ENCODE measurements at regions of chr1 and their contacts with region 1.

Region 1: GRCh38 chr1:3319874-3320245 is 134.6 kb upstream of the ARHGEF16 start:
- DNase-seq: no peak
- H3K4me3 ChIP-seq: no peak overlapping the region
- H3K27ac ChIP-seq: peak overlapping the region; percentile 15 to 51
- H3K4me1 ChIP-seq: peaks cover 10 to 63% of the 10 kb centered on the region in 2 donors
- H3K27me3 ChIP-seq: no peaks in the 10 kb centered on the region
- CTCF ChIP-seq: peak; percentile 57 to 75 (median 74)

Region 2: DNA sequence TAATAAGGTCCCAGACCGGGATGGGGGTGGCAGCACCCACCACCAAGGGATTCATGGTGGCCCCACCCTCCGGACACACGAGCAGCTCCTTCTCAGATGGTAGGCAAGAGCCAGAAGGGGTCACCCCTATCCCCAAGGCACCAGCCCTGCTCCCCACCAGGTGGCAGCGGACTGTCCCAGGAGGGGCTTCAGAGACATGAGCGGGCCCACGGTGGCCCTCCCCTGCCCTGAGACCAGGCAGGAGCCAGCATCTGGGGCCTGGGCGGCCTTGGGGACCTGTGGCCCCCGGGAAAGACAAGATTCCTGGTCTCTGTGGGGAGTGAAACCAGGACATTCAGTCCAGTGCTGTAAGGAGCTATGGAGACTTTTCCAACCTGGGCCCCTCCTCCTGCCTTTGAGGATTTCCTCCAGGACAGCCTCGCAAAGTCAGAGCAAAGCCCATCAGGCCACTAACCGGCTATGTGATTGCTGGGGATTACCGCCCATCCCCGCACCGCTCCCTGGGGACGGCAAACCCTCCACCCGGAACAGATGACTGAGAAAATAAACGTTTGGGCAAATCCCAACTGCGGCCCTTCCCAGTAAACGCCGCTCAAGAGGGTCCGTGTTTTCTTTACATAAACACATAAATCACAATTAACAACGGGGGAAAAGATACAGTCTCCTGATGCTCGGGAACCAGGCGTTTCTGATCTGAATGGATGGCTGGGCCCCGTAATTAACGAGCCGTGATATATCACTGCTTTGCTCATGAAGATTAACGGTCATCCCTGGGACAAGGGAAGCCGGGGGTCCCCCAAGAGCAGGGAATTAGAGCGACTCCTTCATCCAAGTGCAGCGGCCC is 83.8 kb after region 1 on chr1:
- intact Hi-C with region 1: no loop called
- DNase-seq: no peak
- H3K4me3 ChIP-seq: no peak overlapping the region
- H3K27ac ChIP-seq: peak overlapping the region; percentile 22 to 73
- H3K4me1 ChIP-seq: peaks cover 24 to 42% of the 10 kb centered on the region in 2 donors
- H3K27me3 ChIP-seq: no peaks in the 10 kb centered on the region
- CTCF ChIP-seq: peak in 1 of 3 experiments; percentile 9

Region 3: DNA sequence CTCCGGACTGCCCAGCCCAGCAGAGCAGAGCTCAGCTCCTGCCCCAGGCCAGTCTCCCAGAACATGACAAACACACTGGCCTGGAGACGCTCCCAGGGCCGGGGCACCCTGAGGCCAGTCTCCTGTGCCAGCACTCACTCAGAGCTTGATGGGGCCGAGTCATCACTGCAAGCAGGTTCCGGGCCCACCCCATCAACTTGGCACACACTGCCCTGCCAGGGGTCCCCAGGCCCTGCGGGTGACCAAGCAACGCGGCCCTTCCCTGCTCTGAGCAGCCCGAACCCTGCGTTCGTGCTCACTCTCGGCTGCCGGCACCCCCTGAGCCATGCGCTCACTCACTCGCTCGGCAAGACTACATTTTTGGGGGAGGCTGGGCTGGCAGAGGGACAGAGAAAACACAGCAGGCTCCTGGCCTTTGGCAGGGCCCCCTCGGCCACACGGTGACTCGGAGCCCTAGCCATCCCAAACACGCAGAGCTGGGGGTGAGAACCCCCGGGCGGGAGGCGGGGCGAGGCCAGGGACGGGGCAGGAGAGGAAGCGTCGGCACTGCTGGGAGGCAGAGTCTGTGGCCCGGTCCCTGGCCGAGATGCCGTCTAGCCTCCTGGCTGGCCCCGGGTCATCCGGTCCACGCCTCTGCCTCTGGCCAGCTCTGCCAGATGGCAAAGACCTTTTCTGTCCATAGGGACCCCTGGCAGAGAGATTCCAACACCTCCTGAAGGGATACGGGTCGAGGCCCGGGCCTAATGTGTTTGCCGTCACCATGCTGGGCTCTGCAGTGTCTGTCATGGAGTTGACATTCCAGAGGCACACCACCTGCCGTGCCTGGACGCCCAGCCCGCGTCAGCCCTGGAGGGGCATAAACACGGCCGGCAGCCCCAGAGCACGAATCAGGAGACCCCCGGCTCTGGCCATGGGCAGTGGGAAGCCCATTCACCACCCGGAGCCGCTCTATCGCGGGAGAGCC is 223.5 kb after region 1 on chr1:
- intact Hi-C with region 1: loop called (anchors 10 kb)
- DNase-seq: peak; percentile 82 to 97
- H3K4me3 ChIP-seq: peak overlapping the region in 1 of 2 donors; percentile 43
- H3K27ac ChIP-seq: peak overlapping the region; percentile 97 to 98
- H3K4me1 ChIP-seq: peaks cover 52 to 74% of the 10 kb centered on the region in 2 donors
- H3K27me3 ChIP-seq: no peaks in the 10 kb centered on the region
- CTCF ChIP-seq: no peak